HEK293 (cell line): ENCODE measurements at regions of chr11 and their contacts with region 1.

Region 1: GRCh38 chr11:4626207-4627099 is 10.8 kb upstream of the OR51D1 start:
- H3K4me3 ChIP-seq: no peak overlapping the region
- H3K27ac ChIP-seq: no peak overlapping the region
- H3K4me1 ChIP-seq: no peaks in the 10 kb centered on the region
- CTCF ChIP-seq: no peak

Region 2: DNA sequence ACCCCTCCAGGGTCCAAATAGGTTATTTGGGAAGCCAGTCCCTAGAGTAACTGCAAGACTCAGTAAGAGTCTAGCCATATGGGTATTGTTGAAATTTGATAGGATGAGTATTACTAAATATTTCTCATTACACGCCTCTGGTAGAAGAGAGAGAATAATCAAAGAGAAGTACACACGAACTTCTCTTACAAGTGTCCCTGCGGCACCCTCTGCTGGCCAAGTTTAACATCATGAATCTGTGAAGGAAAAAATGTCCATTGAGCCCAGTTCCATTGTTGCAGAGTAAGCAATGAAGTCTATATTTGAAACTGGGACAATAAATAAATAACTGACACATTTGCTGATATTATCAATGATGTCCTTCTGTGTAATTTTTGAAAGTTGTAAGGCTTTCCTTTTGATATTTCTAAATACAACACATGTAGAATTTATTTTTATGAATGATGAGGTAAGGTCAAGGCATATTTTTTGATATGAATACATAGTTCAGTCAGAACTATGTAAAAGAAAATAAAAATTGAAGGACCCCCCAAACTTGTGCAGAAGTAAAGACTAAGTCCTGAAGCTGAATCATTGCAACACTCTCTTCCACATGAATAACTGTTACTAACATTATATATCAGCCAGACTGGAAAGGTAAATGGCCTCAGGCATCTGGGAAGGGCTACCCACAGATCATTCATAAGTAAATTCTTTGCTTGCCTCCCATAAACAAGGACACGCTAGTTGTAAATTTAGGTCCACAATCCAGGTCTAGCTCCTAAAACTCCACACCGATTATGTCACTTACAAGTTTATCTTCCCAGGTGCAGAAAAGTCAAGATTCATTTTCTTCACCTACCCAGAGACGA is 378.2 kb after region 1 on chr11:
- CTCF ChIA-PET with region 1: interaction called, 12 read pairs
- POLR2A ChIA-PET with region 1: no interaction called
- H3K4me3 ChIP-seq: no peak overlapping the region
- H3K27ac ChIP-seq: no peak overlapping the region
- H3K4me1 ChIP-seq: no peaks in the 10 kb centered on the region
- CTCF ChIP-seq: no peak